IMR-90 (cell line): ENCODE measurements at regions of chrX and their contacts with region 1.

Region 1: GRCh38 chrX:137166591-137166990 is 132.8 kb upstream of the GPR101 start:
- DNase-seq: no peak
- ATAC-seq: no peak
- H3K4me3 ChIP-seq: no peak overlapping the region
- H3K27ac ChIP-seq: no peak overlapping the region
- H3K4me1 ChIP-seq: no peaks in the 10 kb centered on the region
- H3K27me3 ChIP-seq: no peaks in the 10 kb centered on the region
- CTCF ChIP-seq: no peak
- POLR2A ChIP-seq: no peak
- RAD21 ChIP-seq: no peak

Region 2: GRCh38 chrX:137101273-137101990 is 65.2 kb before region 1 on chrX:
- CTCF ChIA-PET with region 1: no interaction called
- POLR2A ChIA-PET with region 1: no interaction called
- dilution Hi-C with region 1: no loop called
- in situ Hi-C with region 1: no loop called
- intact Hi-C with region 1: no loop called
- DNase-seq: no peak
- ATAC-seq: no peak
- H3K4me3 ChIP-seq: no peak overlapping the region
- H3K27ac ChIP-seq: no peak overlapping the region
- H3K4me1 ChIP-seq: no peaks in the 10 kb centered on the region
- H3K27me3 ChIP-seq: peaks cover 1% of the 10 kb centered on the region; the same call in 1 of the 2 replicates
- CTCF ChIP-seq: no peak
- POLR2A ChIP-seq: no peak
- RAD21 ChIP-seq: no peak

Region 3: GRCh38 chrX:137178392-137178791 is 11.8 kb after region 1 on chrX:
- CTCF ChIA-PET with region 1: interaction called, 3 read pairs
- POLR2A ChIA-PET with region 1: interaction called, 12 read pairs
- dilution Hi-C with region 1: no loop called
- in situ Hi-C with region 1: no loop called
- intact Hi-C with region 1: no loop called
- DNase-seq: no peak
- ATAC-seq: no peak
- H3K4me3 ChIP-seq: no peak overlapping the region
- H3K27ac ChIP-seq: no peak overlapping the region
- H3K4me1 ChIP-seq: no peaks in the 10 kb centered on the region
- H3K27me3 ChIP-seq: no peaks in the 10 kb centered on the region
- CTCF ChIP-seq: no peak
- POLR2A ChIP-seq: no peak
- RAD21 ChIP-seq: no peak